ENCODE measurements at regions of chr10 and their contacts with region 1.

Region 1: DNA sequence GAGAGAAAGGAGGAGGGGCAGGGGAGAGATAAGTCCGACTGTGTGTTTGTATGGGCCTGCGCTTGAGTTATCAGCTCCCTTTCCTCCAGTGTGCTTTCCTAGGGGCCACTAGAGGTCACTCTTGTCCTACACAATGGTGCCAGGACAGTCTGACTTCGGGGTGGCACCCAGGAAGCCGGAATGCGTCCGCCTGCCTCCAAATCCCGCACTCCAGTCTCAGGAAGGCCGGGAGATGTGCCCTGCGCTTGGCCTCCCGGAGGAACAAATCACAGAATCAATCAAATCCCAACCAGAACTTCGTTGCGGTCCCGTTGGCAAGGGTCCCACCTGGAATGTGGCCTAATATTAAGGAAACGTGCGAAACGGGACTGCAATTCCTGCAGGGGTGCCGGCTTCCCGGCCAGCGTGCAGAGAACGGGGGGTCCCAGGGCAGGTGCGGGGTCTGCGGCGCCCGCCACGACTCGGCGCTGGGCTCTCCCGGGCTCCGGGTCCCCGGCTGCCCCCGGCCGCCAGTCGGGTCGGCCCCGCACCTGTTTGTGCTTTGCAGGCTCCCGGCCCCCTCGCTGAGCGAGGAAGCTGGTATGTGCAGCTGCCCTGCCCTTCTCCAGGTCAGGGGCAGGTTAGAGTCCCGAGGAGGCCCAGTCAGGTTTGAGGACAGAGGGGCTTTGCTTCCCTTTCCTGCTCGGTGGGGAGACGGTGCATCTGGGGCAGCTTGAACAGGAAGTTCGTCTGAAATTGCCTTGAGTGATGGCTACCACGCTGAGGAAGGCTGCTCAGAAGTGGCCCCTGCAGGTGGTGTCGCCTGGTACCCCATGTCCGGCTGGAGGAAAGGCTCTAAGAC is 21.0 kb upstream of the HPS1 start:
- DNase-seq: peak; percentile 88
- H3K4me3 ChIP-seq: peak overlapping the region; percentile 56 to 60
- H3K27ac ChIP-seq: no peak overlapping the region
- H3K4me1 ChIP-seq: no peaks in the 10 kb centered on the region; a peak in 1 of 4 replicates
- H3K27me3 ChIP-seq: peaks cover 18% of the 10 kb centered on the region; the same call in 1 of the 2 replicates
- CTCF ChIP-seq: peak; percentile 80
- EP300 ChIP-seq: no peak
- RAD21 ChIP-seq: peak; percentile 95

Region 2: DNA sequence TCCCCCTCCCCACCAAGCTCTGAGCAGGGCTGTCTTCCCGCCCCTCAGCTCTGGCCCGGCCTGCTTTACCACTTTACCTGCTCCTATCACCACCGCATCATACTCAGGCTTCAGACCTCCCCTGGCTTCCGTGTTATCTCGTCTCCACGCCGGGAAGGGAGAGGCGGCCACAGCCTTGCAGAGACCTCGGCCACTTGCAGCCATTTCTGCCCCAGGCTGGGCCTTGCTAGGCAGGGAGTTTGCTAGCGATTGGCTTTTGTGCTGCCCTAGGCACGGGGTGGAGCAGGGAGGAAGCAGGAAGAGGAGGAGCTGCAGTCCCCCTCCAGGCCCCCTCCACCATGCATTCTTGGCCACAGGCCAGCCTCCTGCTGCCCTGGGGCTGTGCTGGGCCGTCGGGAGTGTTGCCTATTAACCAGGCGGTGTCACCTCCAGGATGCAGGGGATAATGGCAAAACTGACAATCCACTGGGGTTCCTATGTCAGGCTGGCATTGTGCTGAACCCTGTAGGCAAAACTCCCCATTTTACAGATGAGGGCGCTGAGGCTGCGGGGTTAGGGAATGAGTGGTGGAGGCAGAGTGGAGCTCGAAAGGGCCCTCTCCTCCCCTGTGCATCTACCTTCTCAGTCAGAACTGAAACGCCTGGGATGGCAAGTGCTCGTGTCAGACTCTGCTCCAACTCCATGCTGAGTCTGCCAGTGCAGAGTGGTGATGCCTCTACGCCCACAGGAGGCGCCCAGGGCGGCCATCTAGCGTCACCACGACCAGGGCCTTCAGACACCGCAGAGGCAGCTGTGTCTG is 52.6 kb before region 1 on chr10 and contains the start of gene PYROXD2:
- CTCF ChIA-PET with region 1: no interaction called
- POLR2A ChIA-PET with region 1: no interaction called
- DNase-seq: peak; percentile 88
- H3K4me3 ChIP-seq: peak within 1 kb of the TSS; percentile 59 to 60
- H3K27ac ChIP-seq: peak within 1 kb of the TSS; percentile 22 to 58; a peak in 3 of 4 replicates
- H3K4me1 ChIP-seq: peaks cover 6 to 17% of the 10 kb centered on the region in 2 experiments; a peak in 2 of 4 replicates
- H3K27me3 ChIP-seq: no peaks in the 10 kb centered on the region
- CTCF ChIP-seq: no peak
- EP300 ChIP-seq: no peak
- RAD21 ChIP-seq: no peak
- polyA plus RNA-seq, gene PYROXD2: 26.5 and 26.7 TPM in 2 replicates

Region 3: DNA sequence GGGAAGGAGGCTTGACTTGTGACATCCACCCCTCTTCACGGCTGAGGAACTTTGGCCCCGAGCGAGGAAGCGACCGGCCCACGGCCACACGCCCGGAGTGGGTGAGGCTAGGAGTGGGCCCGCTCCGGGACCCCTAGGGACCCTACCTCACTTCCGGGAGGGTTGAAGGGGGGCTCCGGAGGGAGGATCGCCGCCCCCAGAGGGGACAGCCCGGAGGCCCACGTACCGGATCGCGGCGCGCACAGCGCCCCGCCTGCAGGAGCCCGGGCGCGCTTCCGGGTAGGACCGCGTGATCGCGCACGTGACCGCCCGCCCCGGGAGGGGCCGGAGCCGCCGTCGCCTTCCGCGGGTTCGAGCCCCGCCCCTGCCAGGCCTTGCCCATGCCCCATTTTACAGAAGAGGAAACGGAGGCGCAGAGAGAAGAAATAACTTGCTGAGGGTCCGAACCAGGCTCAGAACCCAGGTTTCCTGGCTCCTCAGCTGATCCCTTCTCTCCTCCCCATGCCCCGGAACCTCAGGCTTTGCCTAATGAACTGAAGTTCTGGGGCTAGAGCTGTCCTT is 21.0 kb before region 1 on chr10 and contains the start of gene HPS1:
- CTCF ChIA-PET with region 1: interaction called, 15 read pairs
- POLR2A ChIA-PET with region 1: no interaction called
- DNase-seq: peak; percentile 95
- H3K4me3 ChIP-seq: peak within 1 kb of the TSS; percentile 75 to 77
- H3K27ac ChIP-seq: peak within 1 kb of the TSS; percentile 34 to 58; a peak in 3 of 4 replicates
- H3K4me1 ChIP-seq: peaks cover 0 to 11% of the 10 kb centered on the region in 2 experiments; a peak in 1 of 4 replicates
- H3K27me3 ChIP-seq: no peaks in the 10 kb centered on the region; the same call in 1 of the 2 replicates
- CTCF ChIP-seq: no peak
- EP300 ChIP-seq: no peak
- RAD21 ChIP-seq: no peak
- polyA plus RNA-seq, gene HPS1: 39.2 and 41.4 TPM in 2 replicates

Region 4: GRCh38 chr10:98478430-98479222 is 10.9 kb after region 1 on chr10:
- CTCF ChIA-PET with region 1: interaction called, 39 read pairs
- POLR2A ChIA-PET with region 1: no interaction called
- DNase-seq: no peak
- H3K4me3 ChIP-seq: no peak overlapping the region
- H3K27ac ChIP-seq: no peak overlapping the region
- H3K4me1 ChIP-seq: no peaks in the 10 kb centered on the region
- H3K27me3 ChIP-seq: no peaks in the 10 kb centered on the region
- CTCF ChIP-seq: no peak
- EP300 ChIP-seq: no peak
- RAD21 ChIP-seq: no peak

Region 5: GRCh38 chr10:99084161-99084560 is 616.4 kb after region 1 on chr10:
- CTCF ChIA-PET with region 1: no interaction called
- POLR2A ChIA-PET with region 1: no interaction called
- DNase-seq: no peak
- H3K4me3 ChIP-seq: no peak overlapping the region
- H3K27ac ChIP-seq: no peak overlapping the region
- H3K4me1 ChIP-seq: no peaks in the 10 kb centered on the region
- H3K27me3 ChIP-seq: no peaks in the 10 kb centered on the region
- CTCF ChIP-seq: no peak
- EP300 ChIP-seq: no peak
- RAD21 ChIP-seq: no peak

Region 6: GRCh38 chr10:99248824-99249223 is 781.1 kb after region 1 on chr10:
- CTCF ChIA-PET with region 1: interaction called, 42 read pairs
- POLR2A ChIA-PET with region 1: no interaction called
- DNase-seq: no peak
- H3K4me3 ChIP-seq: no peak overlapping the region
- H3K27ac ChIP-seq: no peak overlapping the region
- H3K4me1 ChIP-seq: no peaks in the 10 kb centered on the region
- H3K27me3 ChIP-seq: no peaks in the 10 kb centered on the region
- CTCF ChIP-seq: no peak
- EP300 ChIP-seq: no peak
- RAD21 ChIP-seq: no peak

Region 7: DNA sequence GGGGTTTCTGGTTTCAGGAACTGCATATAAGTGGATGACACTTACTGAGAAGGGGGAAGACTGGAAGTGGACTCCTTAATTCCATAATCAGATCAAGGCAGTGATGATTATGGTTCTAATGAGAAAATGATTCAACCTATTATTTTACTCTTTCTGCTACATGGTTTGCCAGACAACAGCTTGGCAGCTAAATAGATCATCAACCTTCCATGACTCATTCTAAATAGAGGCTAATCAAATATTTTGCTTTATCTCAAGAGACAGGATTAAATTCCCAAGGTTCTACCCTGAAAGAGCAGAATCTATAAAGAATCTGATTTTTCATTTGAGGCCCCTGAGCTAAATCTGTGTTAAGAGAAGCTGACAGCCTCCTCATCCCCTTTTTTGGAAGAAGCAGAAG is 907.7 kb after region 1 on chr10:
- CTCF ChIA-PET with region 1: interaction called, 10 read pairs
- POLR2A ChIA-PET with region 1: no interaction called
- DNase-seq: no peak
- H3K4me3 ChIP-seq: no peak overlapping the region
- H3K27ac ChIP-seq: no peak overlapping the region
- H3K4me1 ChIP-seq: peaks cover 5 to 9% of the 10 kb centered on the region in 2 experiments; a peak in 2 of 4 replicates
- H3K27me3 ChIP-seq: no peaks in the 10 kb centered on the region; the same call in 1 of the 2 replicates
- CTCF ChIP-seq: no peak
- EP300 ChIP-seq: no peak
- RAD21 ChIP-seq: no peak

Measured in SK-N-SH (cell line).